ENCODE measurements at regions of chr3 and their contacts with region 1.

Region 1: DNA sequence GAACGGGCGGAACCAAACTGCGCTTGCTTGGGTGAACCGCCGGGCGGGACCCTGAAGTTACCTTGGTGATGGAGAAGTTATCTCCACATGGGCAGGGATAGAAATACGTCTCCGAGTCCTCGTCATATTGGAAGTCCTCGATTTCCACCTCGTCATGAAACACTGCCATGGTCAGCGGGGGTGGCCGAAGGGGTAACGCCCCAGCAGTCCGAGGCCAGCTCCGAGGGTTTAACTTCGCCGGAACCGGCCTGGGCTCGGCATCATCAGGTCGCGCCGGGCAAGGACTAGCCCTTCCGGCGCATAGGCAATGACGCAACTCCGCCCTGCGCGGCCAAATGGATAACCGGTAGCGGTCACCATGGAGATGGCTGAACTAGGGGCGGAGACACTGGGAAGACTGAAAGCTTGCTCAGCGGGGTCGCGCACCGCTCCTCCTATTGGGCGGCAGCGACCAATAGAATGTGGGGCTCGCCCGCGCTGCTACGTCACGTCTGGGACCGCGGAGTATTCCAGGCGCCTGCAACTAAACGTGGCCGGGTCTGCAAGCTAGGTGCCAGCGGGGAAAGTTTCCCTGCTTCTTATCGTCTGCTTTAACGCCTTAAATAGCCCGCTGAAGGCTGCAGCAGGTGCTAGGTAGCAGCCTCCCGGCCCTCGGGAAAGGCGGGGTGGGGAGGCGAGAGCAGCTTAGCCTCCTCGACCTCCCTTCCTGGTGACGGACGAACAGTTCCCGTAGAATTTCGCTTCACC is at the starts of genes DPH3 and OXNAD1:
- DNase-seq: peak; percentile 95 to 100 (median 98)
- ATAC-seq: peak; percentile 96 to 98 (median 97)
- H3K4me3 ChIP-seq: peak within 1 kb of the TSS; percentile 84 to 93
- H3K4me3 Mint-ChIP-seq: peak within 1 kb of the TSS; percentile 94 to 97 (median 95)
- H3K27ac ChIP-seq: peak within 1 kb of the TSS; percentile 84
- H3K27ac Mint-ChIP-seq: peak within 1 kb of the TSS; percentile 97 to 99
- H3K4me1 ChIP-seq: peaks cover 15 to 17% of the 10 kb centered on the region in 2 experiments
- H3K4me1 Mint-ChIP-seq: peaks cover 39 to 45% (median 44%) of the 10 kb centered on the region in 3 donors
- H3K27me3 ChIP-seq: no peaks in the 10 kb centered on the region
- H3K27me3 Mint-ChIP-seq: no peaks in the 10 kb centered on the region
- total RNA-seq, gene DPH3: 13.1 to 19.0 (median 14.4) TPM
- total RNA-seq, gene OXNAD1: 78.5 to 218 (median 101) TPM

Region 2: GRCh38 chr3:15098503-15099363 is 1166.1 kb before region 1 on chr3 and contains the start of gene RBSN:
- CTCF ChIA-PET with region 1: interaction called in 1 of 2 experiments, 5 read pairs
- POLR2A ChIA-PET with region 1: interaction called in 1 of 2 experiments, 12 read pairs
- DNase-seq: peak; percentile 89 to 97 (median 94)
- ATAC-seq: peak; percentile 81 to 85 (median 84)
- H3K4me3 ChIP-seq: peak within 1 kb of the TSS; percentile 89 to 93
- H3K4me3 Mint-ChIP-seq: peak within 1 kb of the TSS; percentile 87 to 94 (median 90)
- H3K27ac ChIP-seq: peak within 1 kb of the TSS; percentile 97
- H3K27ac Mint-ChIP-seq: peak within 1 kb of the TSS; percentile 89 to 94
- H3K4me1 ChIP-seq: peaks cover 5 to 23% of the 10 kb centered on the region in 2 experiments
- H3K4me1 Mint-ChIP-seq: peaks cover 25 to 30% (median 29%) of the 10 kb centered on the region in 3 donors
- H3K27me3 ChIP-seq: peaks cover 0 to 3% of the 10 kb centered on the region in 2 experiments
- H3K27me3 Mint-ChIP-seq: no peaks in the 10 kb centered on the region
- total RNA-seq, gene RBSN: 24.7 to 42.7 (median 34.4) TPM

Region 3: GRCh38 chr3:15610082-15610759 is 654.7 kb before region 1 on chr3:
- CTCF ChIA-PET with region 1: no interaction called
- POLR2A ChIA-PET with region 1: no interaction called
- DNase-seq: no peak
- ATAC-seq: no peak
- H3K4me3 ChIP-seq: no peak overlapping the region
- H3K4me3 Mint-ChIP-seq: no peak overlapping the region
- H3K27ac ChIP-seq: no peak overlapping the region
- H3K27ac Mint-ChIP-seq: no peak overlapping the region
- H3K4me1 ChIP-seq: no peaks in the 10 kb centered on the region
- H3K4me1 Mint-ChIP-seq: peaks cover 0 to 28% (median 11%) of the 10 kb centered on the region in 3 donors
- H3K27me3 ChIP-seq: no peaks in the 10 kb centered on the region
- H3K27me3 Mint-ChIP-seq: no peaks in the 10 kb centered on the region

Region 4: DNA sequence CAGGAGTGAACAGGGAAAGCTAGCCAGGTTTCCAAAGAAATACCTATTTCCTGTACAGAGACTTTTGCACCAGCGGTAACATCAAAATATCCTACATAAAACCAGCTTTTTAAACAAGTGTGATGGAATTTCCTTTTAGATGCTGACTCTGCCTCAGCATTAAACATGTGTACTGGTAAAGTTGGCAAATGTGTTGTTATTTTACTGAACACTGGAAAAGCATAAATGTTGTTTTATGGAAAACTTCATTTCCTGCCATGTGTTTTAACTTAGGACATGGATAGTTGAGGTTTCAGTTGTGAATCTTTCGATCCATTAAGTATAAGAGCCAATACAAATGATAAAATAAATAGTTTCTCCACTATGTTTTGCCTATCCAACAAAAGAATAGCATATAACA is 15.8 kb after region 1 on chr3:
- CTCF ChIA-PET with region 1: interaction called, 14 to 120 read pairs
- POLR2A ChIA-PET with region 1: interaction called, 8 to 31 read pairs
- DNase-seq: no peak
- ATAC-seq: no peak
- H3K4me3 ChIP-seq: no peak overlapping the region
- H3K4me3 Mint-ChIP-seq: no peak overlapping the region
- H3K27ac ChIP-seq: no peak overlapping the region
- H3K27ac Mint-ChIP-seq: no peak overlapping the region
- H3K4me1 ChIP-seq: peaks cover 8 to 12% of the 10 kb centered on the region in 2 experiments
- H3K4me1 Mint-ChIP-seq: peaks cover 21 to 26% (median 23%) of the 10 kb centered on the region in 3 donors
- H3K27me3 ChIP-seq: no peaks in the 10 kb centered on the region
- H3K27me3 Mint-ChIP-seq: no peaks in the 10 kb centered on the region

Region 5: GRCh38 chr3:16319307-16319706 is 54.4 kb after region 1 on chr3:
- CTCF ChIA-PET with region 1: interaction called, 6 to 38 read pairs
- POLR2A ChIA-PET with region 1: interaction called, 5 to 6 read pairs
- DNase-seq: peak; percentile 58 to 91 (median 76)
- ATAC-seq: peak; percentile 72 to 85 (median 76)
- H3K4me3 ChIP-seq: no peak overlapping the region
- H3K4me3 Mint-ChIP-seq: peak overlapping the region in 2 of 3 donors; percentile 28 to 81
- H3K27ac ChIP-seq: peak overlapping the region; percentile 43
- H3K27ac Mint-ChIP-seq: peak overlapping the region; percentile 91 to 98
- H3K4me1 ChIP-seq: peaks cover 46 to 65% of the 10 kb centered on the region in 2 experiments
- H3K4me1 Mint-ChIP-seq: peaks cover 76 to 84% (median 81%) of the 10 kb centered on the region in 3 donors
- H3K27me3 ChIP-seq: no peaks in the 10 kb centered on the region
- H3K27me3 Mint-ChIP-seq: no peaks in the 10 kb centered on the region

Region 6: DNA sequence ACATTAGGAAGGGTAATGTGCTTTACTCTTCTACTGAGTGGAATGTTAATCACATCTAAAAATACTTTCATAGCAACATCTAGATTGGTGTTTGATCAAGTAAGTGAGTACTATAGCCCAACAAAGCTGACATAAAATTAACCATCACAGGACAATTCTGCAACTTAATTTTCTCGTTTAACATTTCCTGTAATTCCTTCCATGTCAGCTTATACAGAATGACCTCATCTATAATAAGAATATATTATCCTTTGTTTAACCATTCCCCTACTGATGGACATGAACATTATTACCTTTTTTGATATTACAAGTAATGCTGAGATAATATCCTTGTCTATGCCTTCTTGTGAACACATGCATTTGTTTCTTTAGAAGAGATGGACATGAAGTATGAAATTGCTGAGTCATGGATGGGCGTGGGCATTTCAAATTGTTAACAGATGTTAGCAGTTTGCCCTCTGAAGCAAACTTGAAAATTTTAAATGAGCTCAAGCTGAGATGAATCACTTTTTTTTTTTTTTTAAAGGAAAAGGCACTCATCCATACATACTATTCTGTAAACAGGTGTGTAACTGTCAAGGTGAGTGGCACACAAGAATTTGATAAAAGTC is 85.2 kb after region 1 on chr3:
- CTCF ChIA-PET with region 1: interaction called in 1 of 2 experiments, 11 read pairs
- POLR2A ChIA-PET with region 1: no interaction called
- DNase-seq: no peak
- ATAC-seq: no peak
- H3K4me3 ChIP-seq: no peak overlapping the region
- H3K4me3 Mint-ChIP-seq: no peak overlapping the region
- H3K27ac ChIP-seq: no peak overlapping the region
- H3K27ac Mint-ChIP-seq: peak overlapping the region; percentile 70 to 79
- H3K4me1 ChIP-seq: peaks cover 0 to 5% of the 10 kb centered on the region in 2 experiments
- H3K4me1 Mint-ChIP-seq: peaks cover 38 to 73% (median 58%) of the 10 kb centered on the region in 3 donors
- H3K27me3 ChIP-seq: no peaks in the 10 kb centered on the region
- H3K27me3 Mint-ChIP-seq: no peaks in the 10 kb centered on the region

Region 7: DNA sequence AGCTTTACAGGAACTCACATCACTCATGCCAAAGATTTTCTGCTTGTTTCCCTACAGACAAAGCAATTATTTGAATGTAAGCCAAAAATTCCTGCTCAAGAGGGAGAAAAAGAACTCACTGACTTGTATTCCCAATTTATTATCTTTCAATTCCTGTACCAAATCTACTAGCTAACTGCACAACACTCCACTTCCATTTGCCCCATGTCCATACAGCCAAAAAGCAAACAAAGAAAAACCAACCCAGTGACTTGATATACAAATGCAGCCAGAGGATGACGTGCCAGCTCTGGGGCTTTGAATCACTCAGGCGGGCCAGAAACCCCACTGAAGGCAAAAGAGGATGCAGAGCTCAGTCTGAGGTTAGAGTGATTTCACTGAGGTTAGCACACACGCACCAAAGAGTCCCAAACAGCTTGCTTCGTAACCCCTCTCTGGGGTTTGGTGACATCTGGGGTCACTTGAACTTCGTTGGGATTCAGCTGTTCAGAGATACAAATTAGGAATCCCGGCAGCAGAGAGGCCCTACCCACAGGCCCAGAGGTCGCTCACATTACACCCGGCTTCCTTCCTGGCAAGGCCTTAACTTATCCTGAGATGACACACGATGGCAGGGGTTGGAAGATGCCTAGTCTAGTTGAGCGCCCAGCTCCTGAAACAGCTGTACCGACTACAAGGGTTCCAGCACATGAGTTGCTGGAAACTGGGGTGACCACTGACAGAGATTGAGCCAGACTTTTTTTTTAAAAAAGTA is 247.0 kb after region 1 on chr3:
- CTCF ChIA-PET with region 1: interaction called in 1 of 2 experiments, 5 read pairs
- POLR2A ChIA-PET with region 1: interaction called in 1 of 2 experiments, 18 read pairs
- DNase-seq: peak; percentile 39 to 93 (median 84)
- ATAC-seq: peak; percentile 68 to 88 (median 70)
- H3K4me3 ChIP-seq: peak overlapping the region; percentile 89 to 91
- H3K4me3 Mint-ChIP-seq: peak overlapping the region; percentile 97 to 98 (median 97)
- H3K27ac ChIP-seq: peak overlapping the region; percentile 88
- H3K27ac Mint-ChIP-seq: peak overlapping the region; percentile 89 to 94
- H3K4me1 ChIP-seq: peaks cover 42 to 75% of the 10 kb centered on the region in 2 experiments
- H3K4me1 Mint-ChIP-seq: peaks cover 76 to 83% (median 83%) of the 10 kb centered on the region in 3 donors
- H3K27me3 ChIP-seq: no peaks in the 10 kb centered on the region
- H3K27me3 Mint-ChIP-seq: no peaks in the 10 kb centered on the region

Region 8: GRCh38 chr3:16550676-16551341 is 285.9 kb after region 1 on chr3:
- CTCF ChIA-PET with region 1: interaction called in 1 of 2 experiments, 10 read pairs
- POLR2A ChIA-PET with region 1: interaction called in 1 of 2 experiments, 4 read pairs
- DNase-seq: peak; percentile 32 to 90 (median 66)
- ATAC-seq: peak; percentile 93 to 99 (median 98)
- H3K4me3 ChIP-seq: no peak overlapping the region
- H3K4me3 Mint-ChIP-seq: no peak overlapping the region
- H3K27ac ChIP-seq: no peak overlapping the region
- H3K27ac Mint-ChIP-seq: peak overlapping the region; percentile 61 to 66
- H3K4me1 ChIP-seq: peaks cover 2% of the 10 kb centered on the region in 2 experiments
- H3K4me1 Mint-ChIP-seq: peaks cover 6 to 9% (median 6%) of the 10 kb centered on the region in 3 donors
- H3K27me3 ChIP-seq: peaks cover 0 to 4% of the 10 kb centered on the region in 2 experiments
- H3K27me3 Mint-ChIP-seq: peaks cover 3 to 9% of the 10 kb centered on the region in 2 donors

Region 9: DNA sequence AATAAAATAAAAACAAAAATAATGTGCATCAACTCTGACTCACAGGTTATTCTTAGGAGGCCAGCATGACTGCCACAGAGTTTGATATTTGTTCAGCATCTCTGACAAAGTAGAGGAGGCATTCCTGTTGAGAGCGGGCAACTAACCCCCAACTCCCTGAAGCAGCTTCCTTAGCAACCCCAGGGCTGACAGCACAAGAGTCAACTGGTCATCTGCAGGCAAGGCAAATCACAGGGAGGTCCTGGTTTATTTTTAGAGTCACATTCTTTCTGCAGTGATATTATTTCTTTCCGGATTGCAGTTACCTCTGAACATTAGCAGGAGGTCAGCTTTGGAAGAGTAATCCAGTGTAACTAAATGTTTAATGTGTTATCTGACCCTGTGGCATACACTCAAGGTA is 892.8 kb after region 1 on chr3:
- CTCF ChIA-PET with region 1: no interaction called
- POLR2A ChIA-PET with region 1: no interaction called
- DNase-seq: no peak
- ATAC-seq: no peak
- H3K4me3 ChIP-seq: no peak overlapping the region
- H3K4me3 Mint-ChIP-seq: no peak overlapping the region
- H3K27ac ChIP-seq: no peak overlapping the region
- H3K27ac Mint-ChIP-seq: no peak overlapping the region
- H3K4me1 ChIP-seq: peaks cover 0 to 10% of the 10 kb centered on the region in 2 experiments
- H3K4me1 Mint-ChIP-seq: peaks cover 3 to 22% (median 10%) of the 10 kb centered on the region in 3 donors
- H3K27me3 ChIP-seq: no peaks in the 10 kb centered on the region
- H3K27me3 Mint-ChIP-seq: no peaks in the 10 kb centered on the region

Measured in T-cell (primary cell).